OCI-LY7 (cell line): ENCODE measurements at regions of chr4 and their contacts with region 1.

Region 1: DNA sequence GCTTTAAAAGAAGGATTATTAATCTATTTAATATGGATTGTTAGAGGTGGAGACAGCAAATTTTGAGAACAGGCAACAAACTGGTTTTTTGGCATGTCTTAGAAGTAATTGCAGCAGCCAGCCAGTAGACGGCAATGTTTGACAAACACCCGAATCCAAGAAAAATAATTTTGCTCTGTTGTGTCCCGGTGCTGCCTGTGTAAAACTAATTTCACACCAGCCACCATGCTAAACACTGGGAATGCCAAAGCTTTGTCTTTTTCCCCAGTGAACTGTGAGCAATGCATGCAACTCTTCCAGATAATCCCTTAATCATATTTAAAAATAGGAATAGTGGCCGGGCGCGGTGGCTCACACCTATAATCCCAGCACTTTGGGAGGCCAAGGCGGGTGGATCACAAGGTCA is 25.9 kb downstream of the SMIM31 start:
- DNase-seq: peak; percentile 28
- H3K4me3 ChIP-seq: no peak overlapping the region
- H3K27ac ChIP-seq: no peak overlapping the region
- H3K4me1 ChIP-seq: no peaks in the 10 kb centered on the region
- CTCF ChIP-seq: peak; percentile 87

Region 2: DNA sequence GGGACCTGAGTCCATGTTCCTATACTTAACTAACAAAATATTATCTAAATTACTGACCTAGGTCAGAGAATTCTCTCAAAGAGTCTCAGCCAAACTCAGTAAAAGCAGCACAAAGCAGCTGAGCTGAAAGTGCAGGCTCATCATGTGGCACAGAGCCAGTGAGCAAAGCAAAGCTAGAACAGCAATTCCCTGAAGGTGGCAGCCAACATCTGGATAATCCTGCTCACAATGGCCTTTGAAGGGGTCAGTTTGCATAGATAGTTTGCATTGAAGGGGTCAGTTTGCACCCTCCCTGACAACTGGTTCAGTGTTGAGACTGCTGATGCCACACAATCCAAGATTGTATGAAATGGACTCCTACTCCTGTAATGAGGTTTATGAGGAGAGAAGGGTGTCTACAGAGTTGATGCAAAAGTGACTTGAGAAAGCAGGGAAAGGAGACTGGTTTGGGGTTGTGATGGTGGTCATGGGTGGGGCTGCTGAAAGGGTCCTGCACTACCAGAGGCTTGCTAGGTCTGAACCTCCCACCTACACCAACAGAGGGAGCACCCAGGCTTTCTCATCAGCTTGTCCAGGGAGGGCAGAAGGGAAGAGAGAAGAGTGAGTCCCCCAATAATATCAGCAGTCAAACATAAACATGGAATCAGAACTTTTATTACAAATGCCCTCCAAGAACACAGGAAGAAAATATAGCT is 157.9 kb after region 1 on chr4:
- CTCF ChIA-PET with region 1: no interaction called
- POLR2A ChIA-PET with region 1: no interaction called
- intact Hi-C with region 1: loop called (anchors 1 kb)
- DNase-seq: peak; percentile 23
- H3K4me3 ChIP-seq: no peak overlapping the region
- H3K27ac ChIP-seq: no peak overlapping the region
- H3K4me1 ChIP-seq: no peaks in the 10 kb centered on the region
- CTCF ChIP-seq: peak; percentile 61

Region 3: DNA sequence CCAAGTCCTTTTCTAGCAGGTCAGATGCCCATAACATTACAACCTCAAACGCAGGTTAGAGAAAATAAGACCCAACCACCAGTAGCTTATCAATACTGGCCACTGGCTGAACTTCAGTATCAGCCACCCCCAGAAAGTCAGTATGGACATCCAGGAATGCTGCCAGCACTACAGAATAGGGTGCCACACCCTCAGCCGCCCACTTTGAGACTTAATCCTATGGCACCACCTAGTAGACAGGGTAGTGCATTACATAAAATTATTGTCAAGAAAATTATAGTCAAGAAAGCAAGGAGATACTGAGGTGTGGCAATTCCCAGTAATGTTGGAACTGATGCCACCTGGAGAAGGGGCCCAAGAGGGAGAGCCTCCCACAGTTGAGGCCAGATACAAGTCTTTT is 217.5 kb after region 1 on chr4:
- CTCF ChIA-PET with region 1: no interaction called
- POLR2A ChIA-PET with region 1: no interaction called
- intact Hi-C with region 1: loop called (anchors 2 kb)
- DNase-seq: peak; percentile 20
- H3K4me3 ChIP-seq: no peak overlapping the region
- H3K27ac ChIP-seq: no peak overlapping the region
- H3K4me1 ChIP-seq: no peaks in the 10 kb centered on the region
- CTCF ChIP-seq: peak; percentile 68

Region 4: GRCh38 chr4:165096776-165097175 is 317.0 kb after region 1 on chr4:
- CTCF ChIA-PET with region 1: no interaction called
- POLR2A ChIA-PET with region 1: no interaction called
- intact Hi-C with region 1: loop called (anchors 5 kb)
- DNase-seq: peak; percentile 16
- H3K4me3 ChIP-seq: no peak overlapping the region
- H3K27ac ChIP-seq: no peak overlapping the region
- H3K4me1 ChIP-seq: no peaks in the 10 kb centered on the region
- CTCF ChIP-seq: peak; percentile 78